Activated naive CD4-positive, alpha-beta T cell treated with anti-CD3 and anti-CD28 coated beads for 36 hours (primary cell): ENCODE measurements at regions of chrX and their contacts with region 1.

Region 1: DNA sequence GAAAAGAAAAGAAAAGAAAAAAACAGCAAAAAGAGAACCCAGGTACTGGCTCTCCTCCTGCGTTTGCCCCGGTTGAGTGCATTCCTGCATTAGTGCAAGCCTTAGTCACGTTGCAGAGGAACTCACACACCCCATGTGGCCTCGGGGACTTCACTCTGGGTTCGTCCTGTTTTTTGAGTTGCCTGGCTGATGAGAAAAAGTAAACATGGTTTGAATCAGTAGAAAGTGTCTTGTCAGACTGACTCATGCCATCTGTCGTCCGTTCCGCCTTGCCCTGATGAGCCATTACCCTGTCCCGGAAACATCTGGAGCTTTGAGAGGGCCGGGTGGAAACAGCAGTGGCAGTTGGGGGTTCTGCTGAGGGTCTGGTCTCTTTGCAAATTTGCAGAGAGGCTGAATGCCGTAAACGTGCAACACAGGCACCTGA is 16.3 kb downstream of the CD99 start:
- DNase-seq: peak; percentile 90
- H3K4me3 Mint-ChIP-seq: peak overlapping the region; percentile 28
- H3K27ac Mint-ChIP-seq: peak overlapping the region; percentile 99
- H3K4me1 Mint-ChIP-seq: peaks cover 92% of the 10 kb centered on the region
- H3K27me3 Mint-ChIP-seq: no peaks in the 10 kb centered on the region

Region 2: GRCh38 chrX:1165535-1166196 is 1541.7 kb before region 1 on chrX:
- CTCF ChIA-PET with region 1: no interaction called
- intact Hi-C with region 1: no loop called
- DNase-seq: peak; percentile 48
- H3K4me3 Mint-ChIP-seq: peak overlapping the region; percentile 10
- H3K27ac Mint-ChIP-seq: no peak overlapping the region
- H3K4me1 Mint-ChIP-seq: peaks cover 16% of the 10 kb centered on the region
- H3K27me3 Mint-ChIP-seq: peaks cover 15% of the 10 kb centered on the region

Region 3: GRCh38 chrX:2696698-2697215 is 10.6 kb before region 1 on chrX:
- CTCF ChIA-PET with region 1: no interaction called
- intact Hi-C with region 1: loop called (anchors 1 kb)
- DNase-seq: peak; percentile 76
- H3K4me3 Mint-ChIP-seq: peak overlapping the region; percentile 58
- H3K27ac Mint-ChIP-seq: peak overlapping the region; percentile 99
- H3K4me1 Mint-ChIP-seq: peaks cover 80% of the 10 kb centered on the region
- H3K27me3 Mint-ChIP-seq: no peaks in the 10 kb centered on the region

Region 4: DNA sequence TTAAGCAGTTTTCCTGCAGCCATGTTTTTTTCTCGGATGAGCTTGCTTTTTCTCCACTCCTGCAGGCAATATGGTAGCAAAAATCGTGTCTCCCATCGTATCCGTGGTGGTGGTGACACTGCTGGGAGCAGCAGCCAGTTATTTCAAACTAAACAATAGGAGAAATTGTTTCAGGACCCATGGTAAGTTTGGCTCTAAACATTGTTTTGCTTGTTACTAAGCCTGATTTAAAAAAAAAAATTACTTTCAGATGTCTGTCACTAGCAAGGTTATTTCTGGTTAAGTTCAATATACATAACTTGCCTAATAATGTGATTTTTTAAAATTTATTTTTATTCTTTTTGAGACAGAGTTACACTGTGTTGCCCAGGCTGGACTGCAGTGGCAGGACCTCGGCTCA is 103.9 kb after region 1 on chrX:
- CTCF ChIA-PET with region 1: no interaction called
- intact Hi-C with region 1: loop called (anchors 5 kb)
- DNase-seq: no peak
- H3K4me3 Mint-ChIP-seq: no peak overlapping the region
- H3K27ac Mint-ChIP-seq: no peak overlapping the region
- H3K4me1 Mint-ChIP-seq: peaks cover 3% of the 10 kb centered on the region
- H3K27me3 Mint-ChIP-seq: no peaks in the 10 kb centered on the region

Region 5: DNA sequence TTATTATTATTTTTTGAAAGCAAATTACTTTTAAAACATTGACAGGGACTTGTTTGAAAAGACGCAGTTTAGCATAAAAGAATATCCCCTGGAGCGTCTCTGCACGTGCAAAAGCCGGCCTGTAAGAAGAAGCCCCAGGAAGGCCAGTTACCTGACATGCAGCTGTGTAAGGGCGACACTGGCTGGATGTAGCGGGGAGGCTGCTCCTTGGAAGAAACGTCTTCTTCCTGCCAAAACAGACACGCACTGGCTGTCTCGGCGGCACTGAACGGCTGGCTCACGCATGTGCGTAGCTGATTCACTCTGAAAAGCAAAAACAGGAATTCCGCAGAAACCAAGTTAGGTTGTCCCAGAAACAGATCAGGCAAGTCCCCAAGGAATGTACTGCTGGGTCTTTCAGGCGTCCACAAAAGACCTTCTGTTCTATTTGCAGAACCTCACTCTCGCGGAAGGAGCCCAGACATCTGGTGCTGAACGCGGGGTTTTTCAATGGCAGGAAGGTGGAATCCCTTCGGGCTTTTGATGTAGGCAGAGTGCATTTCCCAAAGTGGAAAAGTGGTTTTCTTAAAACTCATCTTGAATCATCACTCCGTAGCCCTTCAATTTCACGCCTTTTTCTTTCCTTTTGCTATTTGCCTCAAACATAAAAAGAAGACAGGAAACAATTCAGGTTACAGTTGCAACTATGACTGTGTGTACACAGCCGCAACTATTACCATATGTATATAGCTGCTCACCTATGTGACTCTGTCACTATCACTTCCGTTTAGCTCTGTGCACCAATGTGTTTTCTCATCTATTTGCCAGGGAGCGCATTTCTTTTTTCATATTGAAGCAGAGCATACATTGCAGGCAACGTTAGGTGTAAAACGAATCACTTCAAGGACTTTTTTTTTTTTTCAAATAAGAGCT is 260.9 kb after region 1 on chrX:
- CTCF ChIA-PET with region 1: no interaction called
- intact Hi-C with region 1: loop called (anchors 1 kb)
- DNase-seq: peak; percentile 61
- H3K4me3 Mint-ChIP-seq: peak overlapping the region; percentile 24
- H3K27ac Mint-ChIP-seq: peak overlapping the region; percentile 76
- H3K4me1 Mint-ChIP-seq: peaks cover 10% of the 10 kb centered on the region
- H3K27me3 Mint-ChIP-seq: no peaks in the 10 kb centered on the region